ENCODE measurements at regions of chr18 and their contacts with region 1.

Region 1: GRCh38 chr18:4146797-4147196 is 308.3 kb downstream of the DLGAP1 start:
- DNase-seq: no peak
- ATAC-seq: no peak
- H3K4me3 Mint-ChIP-seq: no peak overlapping the region
- H3K27ac Mint-ChIP-seq: no peak overlapping the region
- H3K4me1 Mint-ChIP-seq: no peaks in the 10 kb centered on the region
- H3K27me3 Mint-ChIP-seq: no peaks in the 10 kb centered on the region

Region 2: DNA sequence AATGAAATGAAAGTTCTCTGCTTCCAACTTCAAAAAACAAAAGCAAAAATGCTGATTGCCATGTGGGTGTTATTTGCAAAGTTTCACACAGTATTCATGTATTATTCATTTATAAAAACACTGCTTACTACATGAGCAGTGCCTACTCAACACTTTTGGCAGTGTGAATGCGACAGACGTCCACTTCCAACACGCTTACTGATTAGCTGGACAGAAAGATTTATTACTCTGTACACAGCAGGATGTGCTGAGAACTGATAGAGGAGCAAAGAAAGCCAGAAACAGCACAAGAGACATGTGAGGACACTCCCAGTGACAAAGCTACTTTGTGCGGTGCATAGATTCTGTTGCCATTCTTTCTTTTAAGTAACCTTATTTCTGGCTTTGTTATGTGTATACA is 49.5 kb after region 1 on chr18:
- CTCF ChIA-PET with region 1: no interaction called
- POLR2A ChIA-PET with region 1: no interaction called
- intact Hi-C with region 1: loop called in 1 of 2 experiments (anchors 5 kb)
- DNase-seq: no peak
- ATAC-seq: no peak
- H3K4me3 Mint-ChIP-seq: no peak overlapping the region
- H3K27ac Mint-ChIP-seq: no peak overlapping the region
- H3K4me1 Mint-ChIP-seq: no peaks in the 10 kb centered on the region
- H3K27me3 Mint-ChIP-seq: no peaks in the 10 kb centered on the region